AG04450 (cell line): ENCODE measurements at regions of chr1 and their contacts with region 1.

Region 1: DNA sequence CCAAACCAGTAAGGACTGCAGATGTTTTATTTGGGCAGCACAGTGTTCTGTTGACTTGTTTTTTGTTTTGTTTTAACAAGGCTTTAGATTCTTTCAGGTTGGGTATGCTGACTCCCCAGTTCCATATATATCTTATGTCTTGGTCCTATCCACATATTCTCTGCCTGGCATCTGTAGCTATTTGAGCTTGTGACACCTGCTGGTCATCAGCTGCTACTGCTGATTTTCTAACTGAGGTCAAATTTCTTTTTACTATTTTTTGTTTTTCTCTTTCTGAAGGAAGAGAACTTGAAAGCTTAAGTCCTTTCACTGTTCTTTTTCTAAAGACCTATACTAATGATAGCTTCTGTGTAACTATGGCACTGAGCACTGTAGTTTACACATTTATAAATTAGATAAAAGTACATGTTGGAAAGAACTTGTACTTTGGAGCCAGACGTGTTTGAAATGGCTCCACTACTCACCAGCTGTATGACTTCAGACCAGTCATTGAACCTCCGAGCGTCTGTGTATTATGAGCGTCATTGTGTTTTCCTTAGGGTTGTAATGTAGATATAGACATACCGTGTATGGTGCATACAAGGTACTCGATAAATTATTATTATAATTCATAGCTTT is 109.4 kb downstream of the NRDC start:
- DNase-seq: peak; percentile 34
- H3K4me3 ChIP-seq: no peak overlapping the region
- H3K27ac ChIP-seq: no peak overlapping the region
- H3K27me3 ChIP-seq: no peaks in the 10 kb centered on the region
- CTCF ChIP-seq: peak; percentile 91

Region 2: GRCh38 chr1:51569284-51570062 is 199.6 kb before region 1 on chr1:
- CTCF ChIA-PET with region 1: interaction called, 15 read pairs
- POLR2A ChIA-PET with region 1: no interaction called
- DNase-seq: peak; percentile 30
- H3K4me3 ChIP-seq: no peak overlapping the region
- H3K27ac ChIP-seq: no peak overlapping the region
- H3K27me3 ChIP-seq: no peaks in the 10 kb centered on the region
- CTCF ChIP-seq: peak; percentile 31

Region 3: DNA sequence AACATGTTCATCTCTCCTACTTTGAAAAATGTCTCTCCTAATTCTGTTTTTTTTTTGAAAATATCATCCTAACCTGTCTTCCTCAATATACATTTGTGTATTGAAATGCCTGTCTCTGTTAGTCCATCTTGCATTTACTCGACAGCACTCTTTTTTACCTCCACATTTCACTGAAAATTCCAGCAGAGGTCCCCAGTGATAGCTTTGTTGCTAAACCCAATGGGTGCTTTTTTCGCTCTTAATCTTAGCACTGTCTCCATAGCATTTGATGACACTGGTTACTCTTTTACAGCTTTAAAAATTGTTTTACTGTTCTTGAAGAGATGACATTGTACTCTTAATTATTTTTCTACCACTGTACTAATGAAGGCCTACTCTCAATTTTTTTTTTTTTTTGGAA is 141.4 kb before region 1 on chr1:
- CTCF ChIA-PET with region 1: interaction called, 55 read pairs
- POLR2A ChIA-PET with region 1: no interaction called
- DNase-seq: no peak
- H3K4me3 ChIP-seq: no peak overlapping the region
- H3K27ac ChIP-seq: no peak overlapping the region
- H3K27me3 ChIP-seq: no peaks in the 10 kb centered on the region
- CTCF ChIP-seq: peak; percentile 65

Region 4: GRCh38 chr1:51690285-51690961 is 78.7 kb before region 1 on chr1:
- CTCF ChIA-PET with region 1: interaction called, 12 read pairs
- POLR2A ChIA-PET with region 1: no interaction called
- DNase-seq: peak; percentile 53
- H3K4me3 ChIP-seq: no peak overlapping the region
- H3K27ac ChIP-seq: peak overlapping the region; percentile 53
- H3K27me3 ChIP-seq: no peaks in the 10 kb centered on the region
- CTCF ChIP-seq: no peak